Naive thymus-derived CD4-positive, alpha-beta T cell (primary cell): ENCODE measurements at regions of chr5 and their contacts with region 1.

Region 1: GRCh38 chr5:134101686-134102439 is 12.6 kb upstream of the TCF7 start:
- DNase-seq: peak in 8 of 9 donors; percentile 55 to 79 (median 69)
- ATAC-seq: peak; percentile 62
- H3K4me3 ChIP-seq: peak overlapping the region; percentile 19
- H3K4me3 Mint-ChIP-seq: peak overlapping the region in 6 of 10 donors; percentile 27 to 81 (median 64)
- H3K27ac ChIP-seq: peak overlapping the region; percentile 80
- H3K27ac Mint-ChIP-seq: peak overlapping the region in 8 of 9 donors; percentile 32 to 98 (median 94)
- H3K4me1 ChIP-seq: peaks cover 73 to 89% of the 10 kb centered on the region in 2 donors
- H3K4me1 Mint-ChIP-seq: peaks cover 51 to 98% (median 83%) of the 10 kb centered on the region in 7 donors
- H3K27me3 ChIP-seq: no peaks in the 10 kb centered on the region
- H3K27me3 Mint-ChIP-seq: peaks cover 0 to 11% (median 0%) of the 10 kb centered on the region in 5 donors

Region 2: GRCh38 chr5:133794781-133795415 is 307.0 kb before region 1 on chr5:
- CTCF ChIA-PET with region 1: no interaction called
- POLR2A ChIA-PET with region 1: no interaction called
- intact Hi-C with region 1: no loop called
- DNase-seq: no peak
- ATAC-seq: no peak
- H3K4me3 ChIP-seq: no peak overlapping the region
- H3K4me3 Mint-ChIP-seq: no peak overlapping the region
- H3K27ac ChIP-seq: no peak overlapping the region
- H3K27ac Mint-ChIP-seq: no peak overlapping the region
- H3K4me1 ChIP-seq: no peaks in the 10 kb centered on the region
- H3K4me1 Mint-ChIP-seq: no peaks in the 10 kb centered on the region
- H3K27me3 ChIP-seq: no peaks in the 10 kb centered on the region
- H3K27me3 Mint-ChIP-seq: peaks cover 0 to 20% (median 6%) of the 10 kb centered on the region in 5 donors

Region 3: GRCh38 chr5:134070725-134071613 is 30.9 kb before region 1 on chr5:
- CTCF ChIA-PET with region 1: interaction called, 40 read pairs
- POLR2A ChIA-PET with region 1: interaction called, 52 read pairs
- intact Hi-C with region 1: loop called (anchors 1 kb)
- DNase-seq: peak in 5 of 9 donors; percentile 27 to 61 (median 41)
- ATAC-seq: peak; percentile 50
- H3K4me3 ChIP-seq: peak overlapping the region; percentile 62
- H3K4me3 Mint-ChIP-seq: peak overlapping the region; percentile 74 to 95 (median 87)
- H3K27ac ChIP-seq: peak overlapping the region; percentile 72
- H3K27ac Mint-ChIP-seq: peak overlapping the region; percentile 79 to 99 (median 95)
- H3K4me1 ChIP-seq: peaks cover 18 to 75% of the 10 kb centered on the region in 2 donors
- H3K4me1 Mint-ChIP-seq: peaks cover 44 to 95% (median 78%) of the 10 kb centered on the region in 7 donors
- H3K27me3 ChIP-seq: no peaks in the 10 kb centered on the region
- H3K27me3 Mint-ChIP-seq: peaks cover 0 to 23% (median 0%) of the 10 kb centered on the region in 5 donors

Region 4: DNA sequence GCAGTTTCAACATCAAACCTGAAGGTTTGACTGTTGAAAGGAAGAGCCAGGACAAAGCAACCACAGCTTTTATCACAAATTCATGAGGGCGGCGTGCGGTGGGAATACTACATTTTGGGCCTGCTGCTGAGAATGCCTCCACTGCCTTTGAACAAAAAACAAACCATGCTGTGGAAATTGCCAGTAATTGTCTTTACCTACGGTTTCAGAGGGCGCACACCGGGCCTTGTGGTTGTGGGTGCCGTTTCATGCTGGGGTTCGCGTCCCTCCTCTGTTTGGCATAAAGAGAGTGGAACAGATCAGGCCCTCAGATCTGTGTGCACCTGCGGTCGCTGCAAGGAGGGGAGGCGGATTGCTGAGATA is 14.9 kb before region 1 on chr5:
- CTCF ChIA-PET with region 1: interaction called, 6 read pairs
- POLR2A ChIA-PET with region 1: no interaction called
- intact Hi-C with region 1: loop called (anchors 1 kb)
- DNase-seq: peak; percentile 45 to 96 (median 93)
- ATAC-seq: peak; percentile 87
- H3K4me3 ChIP-seq: peak overlapping the region; percentile 32
- H3K4me3 Mint-ChIP-seq: peak overlapping the region; percentile 74 to 87 (median 82)
- H3K27ac ChIP-seq: peak overlapping the region; percentile 66
- H3K27ac Mint-ChIP-seq: peak overlapping the region; percentile 81 to 99 (median 96)
- H3K4me1 ChIP-seq: peaks cover 59 to 87% of the 10 kb centered on the region in 2 donors
- H3K4me1 Mint-ChIP-seq: peaks cover 47 to 98% (median 85%) of the 10 kb centered on the region in 7 donors
- H3K27me3 ChIP-seq: no peaks in the 10 kb centered on the region
- H3K27me3 Mint-ChIP-seq: peaks cover 0 to 24% (median 0%) of the 10 kb centered on the region in 5 donors

Region 5: GRCh38 chr5:134125039-134126015 is 23.5 kb after region 1 on chr5:
- CTCF ChIA-PET with region 1: interaction called, 16 read pairs
- POLR2A ChIA-PET with region 1: no interaction called
- intact Hi-C with region 1: no loop called
- DNase-seq: no peak
- ATAC-seq: no peak
- H3K4me3 ChIP-seq: peak overlapping the region; percentile 86
- H3K4me3 Mint-ChIP-seq: peak overlapping the region; percentile 93 to 100 (median 98)
- H3K27ac ChIP-seq: peak overlapping the region; percentile 97
- H3K27ac Mint-ChIP-seq: peak overlapping the region; percentile 80 to 99 (median 98)
- H3K4me1 ChIP-seq: peaks cover 61 to 100% of the 10 kb centered on the region in 2 donors
- H3K4me1 Mint-ChIP-seq: peaks cover 31 to 91% (median 69%) of the 10 kb centered on the region in 7 donors
- H3K27me3 ChIP-seq: no peaks in the 10 kb centered on the region
- H3K27me3 Mint-ChIP-seq: peaks cover 0 to 3% (median 0%) of the 10 kb centered on the region in 5 donors

Region 6: GRCh38 chr5:134140530-134141201 is 38.8 kb after region 1 on chr5:
- CTCF ChIA-PET with region 1: interaction called, 36 read pairs
- POLR2A ChIA-PET with region 1: no interaction called
- intact Hi-C with region 1: loop called (anchors 1 kb)
- DNase-seq: peak in 5 of 9 donors; percentile 30 to 63 (median 50)
- ATAC-seq: peak; percentile 67
- H3K4me3 ChIP-seq: no peak overlapping the region
- H3K4me3 Mint-ChIP-seq: peak overlapping the region in 5 of 10 donors; percentile 21 to 58 (median 41)
- H3K27ac ChIP-seq: peak overlapping the region; percentile 97
- H3K27ac Mint-ChIP-seq: peak overlapping the region; percentile 60 to 99 (median 90)
- H3K4me1 ChIP-seq: peaks cover 38 to 61% of the 10 kb centered on the region in 2 donors
- H3K4me1 Mint-ChIP-seq: peaks cover 36 to 81% (median 60%) of the 10 kb centered on the region in 7 donors
- H3K27me3 ChIP-seq: no peaks in the 10 kb centered on the region
- H3K27me3 Mint-ChIP-seq: peaks cover 0 to under 1% (median 0%) of the 10 kb centered on the region in 5 donors